Activated CD8-positive, alpha-beta T cell treated with anti-CD3 and anti-CD28 coated beads, Interleukin-2, amount 10 ng/mL, durations not matched to agents 7 days and 5 days (primary cell): ENCODE measurements at regions of chr10 and their contacts with region 1.

Region 1: GRCh38 chr10:117442944-117443685 is 67.9 kb upstream of the PDZD8 start:
- DNase-seq: peak; percentile 62
- ATAC-seq: peak; percentile 53
- H3K4me3 Mint-ChIP-seq: no peak overlapping the region
- H3K27ac Mint-ChIP-seq: no peak overlapping the region
- H3K4me1 Mint-ChIP-seq: no peaks in the 10 kb centered on the region
- H3K27me3 Mint-ChIP-seq: no peaks in the 10 kb centered on the region

Region 2: GRCh38 chr10:117429643-117430265 is 13.4 kb before region 1 on chr10:
- CTCF ChIA-PET with region 1: interaction called, 11 read pairs
- POLR2A ChIA-PET with region 1: no interaction called
- DNase-seq: no peak
- ATAC-seq: no peak
- H3K4me3 Mint-ChIP-seq: no peak overlapping the region
- H3K27ac Mint-ChIP-seq: no peak overlapping the region
- H3K4me1 Mint-ChIP-seq: no peaks in the 10 kb centered on the region
- H3K27me3 Mint-ChIP-seq: peaks cover 5% of the 10 kb centered on the region

Region 3: GRCh38 chr10:117496616-117497028 is 53.5 kb after region 1 on chr10:
- CTCF ChIA-PET with region 1: no interaction called
- POLR2A ChIA-PET with region 1: no interaction called
- DNase-seq: peak; percentile 72
- ATAC-seq: peak; percentile 64
- H3K4me3 Mint-ChIP-seq: no peak overlapping the region
- H3K27ac Mint-ChIP-seq: no peak overlapping the region
- H3K4me1 Mint-ChIP-seq: no peaks in the 10 kb centered on the region
- H3K27me3 Mint-ChIP-seq: peaks cover 20% of the 10 kb centered on the region